GM13977 (cell line): ENCODE measurements at regions of chr11 and their contacts with region 1.

Region 1: GRCh38 chr11:122505304-122506006 is 150.1 kb upstream of the UBASH3B start:
- DNase-seq: peak; percentile 62
- CTCF ChIP-seq: peak; percentile 88

Region 2: GRCh38 chr11:121655537-121656327 is 849.7 kb before region 1 on chr11:
- in situ Hi-C with region 1: loop called (anchors 10 kb)
- DNase-seq: peak; percentile 85
- CTCF ChIP-seq: peak; percentile 99

Region 3: GRCh38 chr11:122215244-122215992 is 290.0 kb before region 1 on chr11:
- in situ Hi-C with region 1: loop called (anchors 10 kb)
- DNase-seq: peak; percentile 56
- CTCF ChIP-seq: peak; percentile 91

Region 4: GRCh38 chr11:122628810-122629555 is 123.5 kb after region 1 on chr11:
- in situ Hi-C with region 1: no loop called
- DNase-seq: peak; percentile 72
- CTCF ChIP-seq: peak; percentile 87

Region 5: GRCh38 chr11:123093739-123094138 is 588.3 kb after region 1 on chr11:
- in situ Hi-C with region 1: no loop called
- DNase-seq: no peak
- CTCF ChIP-seq: no peak